ENCODE measurements at regions of chr6 and their contacts with region 1.

Region 1: DNA sequence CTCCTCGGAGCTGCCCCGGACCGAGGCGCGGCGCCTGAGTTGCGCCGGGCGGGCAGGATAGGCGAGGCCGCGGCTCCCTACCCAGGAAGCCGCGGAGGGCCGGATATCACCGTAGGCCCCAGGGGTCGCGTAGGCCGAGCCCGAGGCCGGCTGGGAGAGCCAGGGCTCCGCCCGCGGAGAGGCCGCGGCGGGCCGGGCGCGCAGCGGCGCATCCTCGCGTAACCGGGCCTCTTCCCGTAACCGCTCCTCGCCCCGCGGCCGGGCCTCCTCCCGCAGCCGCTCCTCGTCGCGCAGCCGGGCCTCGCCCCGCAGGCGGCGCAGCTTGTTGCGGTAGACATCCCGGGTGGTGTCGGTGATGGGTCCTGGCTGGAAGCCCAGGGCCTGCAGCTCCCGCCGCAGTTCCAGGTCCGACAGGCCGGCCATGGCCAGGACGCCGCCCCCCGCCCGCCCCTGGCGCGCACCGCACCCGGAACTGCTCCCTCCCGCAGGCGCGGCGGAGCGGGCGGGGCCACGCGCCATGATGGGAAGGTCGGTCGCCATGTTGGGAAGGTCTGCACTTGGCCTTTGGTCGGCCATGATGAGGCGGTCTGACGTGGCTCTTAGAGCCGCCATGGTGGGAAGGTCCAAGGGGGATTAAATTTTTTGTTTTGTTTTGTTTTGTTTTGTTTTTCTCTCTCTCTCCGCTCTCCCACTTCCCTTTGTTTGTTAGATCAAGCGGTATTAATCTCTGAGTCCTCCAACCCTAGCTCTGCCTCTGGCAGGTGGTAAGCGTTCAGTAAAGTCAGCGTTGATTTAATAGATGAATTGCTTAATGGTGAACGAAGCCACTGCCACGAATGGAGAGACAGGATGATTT is at the start of gene LEMD2:
- DNase-seq: peak; percentile 88 to 96 (median 91)
- ATAC-seq: peak; percentile 94
- H3K4me3 ChIP-seq: peak within 1 kb of the TSS; percentile 80
- H3K4me3 Mint-ChIP-seq: peak within 1 kb of the TSS; percentile 93 to 100 (median 98)
- H3K27ac ChIP-seq: peak within 1 kb of the TSS; percentile 92
- H3K27ac Mint-ChIP-seq: peak within 1 kb of the TSS; percentile 95 to 99 (median 97)
- H3K4me1 ChIP-seq: peaks cover 37 to 40% of the 10 kb centered on the region in 2 donors
- H3K4me1 Mint-ChIP-seq: peaks cover 40 to 55% (median 51%) of the 10 kb centered on the region in 7 donors
- H3K27me3 ChIP-seq: no peaks in the 10 kb centered on the region
- H3K27me3 Mint-ChIP-seq: peaks cover 0 to 25% (median 0%) of the 10 kb centered on the region in 5 donors
- total RNA-seq, gene LEMD2: 71.4 to 124 (median 118) TPM

Region 2: DNA sequence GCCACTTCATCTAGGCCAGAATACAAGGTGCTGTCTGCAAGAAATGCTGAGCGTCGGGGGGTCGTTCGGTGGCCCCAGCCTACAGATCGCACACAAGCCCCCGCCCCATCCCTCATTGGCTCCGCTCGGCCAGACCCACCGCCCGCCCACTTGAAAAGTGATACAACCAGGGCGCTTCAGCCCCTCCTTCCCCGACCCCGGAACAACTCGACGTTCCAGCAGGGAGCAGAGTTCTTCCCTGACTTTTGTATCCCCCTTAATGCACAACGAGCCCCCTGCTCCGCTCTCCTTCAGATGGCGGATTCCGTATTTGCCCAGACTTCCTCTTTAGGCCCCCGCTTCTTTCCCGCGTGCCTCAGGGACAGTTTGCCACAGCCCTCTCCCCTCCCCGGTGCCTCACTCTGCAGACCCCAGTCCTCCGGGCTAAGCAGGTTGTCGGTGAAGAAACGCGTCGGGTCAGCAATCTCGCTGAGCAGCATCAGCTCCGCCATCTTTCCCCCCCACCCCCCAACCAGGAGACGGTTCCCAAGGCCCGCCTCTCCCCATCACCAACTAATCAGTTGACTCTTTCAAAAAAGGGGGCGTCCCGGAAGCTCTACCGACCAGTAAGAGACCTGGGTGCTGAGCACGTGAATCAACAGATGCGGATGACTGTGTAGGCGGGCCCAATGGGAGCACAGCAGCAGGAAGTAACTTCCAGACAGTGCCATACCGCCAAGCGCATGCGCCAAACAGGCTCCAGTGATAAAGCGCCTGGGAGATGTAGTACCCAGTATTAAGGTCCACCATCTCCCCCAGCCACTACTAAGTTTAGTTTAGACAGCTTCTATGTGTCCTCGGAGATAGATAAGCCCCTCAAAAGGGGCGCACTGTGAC is 1661.0 kb before region 1 on chr6 and contains the start of gene ATF6B:
- CTCF ChIA-PET with region 1: no interaction called
- POLR2A ChIA-PET with region 1: no interaction called
- intact Hi-C with region 1: loop called in 1 of 2 experiments (anchors 2 kb)
- DNase-seq: peak; percentile 80 to 100 (median 96)
- ATAC-seq: peak; percentile 97
- H3K4me3 ChIP-seq: peak within 1 kb of the TSS; percentile 96
- H3K4me3 Mint-ChIP-seq: peak within 1 kb of the TSS; percentile 96 to 100 (median 98)
- H3K27ac ChIP-seq: peak within 1 kb of the TSS; percentile 92
- H3K27ac Mint-ChIP-seq: peak within 1 kb of the TSS; percentile 83 to 98 (median 97)
- H3K4me1 ChIP-seq: peaks cover 33% of the 10 kb centered on the region in 2 donors
- H3K4me1 Mint-ChIP-seq: peaks cover 38 to 66% (median 53%) of the 10 kb centered on the region in 7 donors
- H3K27me3 ChIP-seq: no peaks in the 10 kb centered on the region
- H3K27me3 Mint-ChIP-seq: peaks cover 0 to 4% (median 0%) of the 10 kb centered on the region in 5 donors
- total RNA-seq, gene ATF6B: 115 to 168 (median 142) TPM

Region 3: GRCh38 chr6:33454009-33454946 is 334.6 kb before region 1 on chr6 and contains the start of gene ZBTB9:
- CTCF ChIA-PET with region 1: no interaction called
- POLR2A ChIA-PET with region 1: no interaction called
- intact Hi-C with region 1: loop called (anchors 1 kb)
- DNase-seq: peak; percentile 80 to 93 (median 92)
- ATAC-seq: peak; percentile 100
- H3K4me3 ChIP-seq: peak within 1 kb of the TSS; percentile 93
- H3K4me3 Mint-ChIP-seq: peak within 1 kb of the TSS; percentile 88 to 99 (median 95)
- H3K27ac ChIP-seq: peak within 1 kb of the TSS; percentile 88
- H3K27ac Mint-ChIP-seq: peak within 1 kb of the TSS; percentile 86 to 98 (median 92)
- H3K4me1 ChIP-seq: peaks cover 12 to 22% of the 10 kb centered on the region in 2 donors
- H3K4me1 Mint-ChIP-seq: peaks cover 21 to 57% (median 45%) of the 10 kb centered on the region in 7 donors
- H3K27me3 ChIP-seq: no peaks in the 10 kb centered on the region
- H3K27me3 Mint-ChIP-seq: no peaks in the 10 kb centered on the region
- total RNA-seq, gene ZBTB9: 3.3 to 14.0 (median 9.8) TPM

Region 4: GRCh38 chr6:33620856-33621710 is 167.8 kb before region 1 on chr6 and contains the start of gene ITPR3:
- CTCF ChIA-PET with region 1: no interaction called
- POLR2A ChIA-PET with region 1: no interaction called
- intact Hi-C with region 1: loop called in 1 of 2 experiments (anchors 10 kb)
- DNase-seq: peak; percentile 63 to 83 (median 80)
- ATAC-seq: peak; percentile 94
- H3K4me3 ChIP-seq: peak within 1 kb of the TSS; percentile 80
- H3K4me3 Mint-ChIP-seq: peak within 1 kb of the TSS; percentile 91 to 97 (median 96)
- H3K27ac ChIP-seq: peak within 1 kb of the TSS; percentile 97
- H3K27ac Mint-ChIP-seq: peak within 1 kb of the TSS; percentile 82 to 96 (median 94)
- H3K4me1 ChIP-seq: peaks cover 9 to 35% of the 10 kb centered on the region in 2 donors
- H3K4me1 Mint-ChIP-seq: peaks cover 29 to 74% (median 66%) of the 10 kb centered on the region in 7 donors
- H3K27me3 ChIP-seq: no peaks in the 10 kb centered on the region
- H3K27me3 Mint-ChIP-seq: peaks cover 0 to 2% (median 0%) of the 10 kb centered on the region in 5 donors
- total RNA-seq, gene ITPR3: 35.6 to 65.7 (median 47.7) TPM

Region 5: DNA sequence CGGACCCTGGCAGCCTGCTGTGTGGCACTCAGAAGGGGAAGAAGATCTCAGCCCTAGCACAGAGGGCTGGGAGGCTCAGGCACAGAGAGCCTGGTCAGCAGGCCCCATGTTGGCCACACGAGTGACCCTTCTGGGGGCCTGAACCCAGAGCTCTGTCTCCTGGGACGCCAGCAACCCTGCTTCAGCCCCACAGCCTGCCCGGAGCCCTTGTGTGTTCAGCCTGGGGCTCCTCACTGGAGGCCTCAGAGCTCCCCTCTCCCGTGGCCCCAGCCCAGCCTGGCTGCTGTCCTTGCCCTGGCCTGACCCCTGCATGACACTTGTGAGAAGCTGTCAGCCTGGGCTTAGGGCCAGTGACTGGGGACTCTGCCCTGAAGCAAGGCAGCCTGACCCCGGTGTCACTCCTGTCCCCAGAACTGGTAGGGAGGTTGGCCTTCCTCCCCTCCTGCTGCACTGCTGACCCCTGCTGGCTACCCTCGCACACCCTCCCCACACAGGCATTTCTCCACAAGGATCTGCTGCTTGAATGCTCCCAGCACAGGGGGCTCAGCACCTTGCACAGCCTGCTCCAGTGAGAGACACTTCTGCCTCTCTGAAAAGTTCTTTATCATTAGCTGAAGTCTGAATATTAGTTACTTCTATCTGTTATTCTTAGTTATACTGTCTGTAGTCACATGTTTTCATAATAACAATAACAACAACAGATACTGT is 26.8 kb before region 1 on chr6:
- CTCF ChIA-PET with region 1: no interaction called
- POLR2A ChIA-PET with region 1: no interaction called
- intact Hi-C with region 1: no loop called
- DNase-seq: peak in 6 of 9 donors; percentile 21 to 34 (median 30)
- ATAC-seq: peak; percentile 67
- H3K4me3 ChIP-seq: no peak overlapping the region
- H3K4me3 Mint-ChIP-seq: no peak overlapping the region
- H3K27ac ChIP-seq: no peak overlapping the region
- H3K27ac Mint-ChIP-seq: peak overlapping the region in 1 of 9 donors; percentile 8
- H3K4me1 ChIP-seq: no peaks in the 10 kb centered on the region
- H3K4me1 Mint-ChIP-seq: no peaks in the 10 kb centered on the region
- H3K27me3 ChIP-seq: no peaks in the 10 kb centered on the region
- H3K27me3 Mint-ChIP-seq: peaks cover 0 to 8% (median 5%) of the 10 kb centered on the region in 5 donors

Region 6: DNA sequence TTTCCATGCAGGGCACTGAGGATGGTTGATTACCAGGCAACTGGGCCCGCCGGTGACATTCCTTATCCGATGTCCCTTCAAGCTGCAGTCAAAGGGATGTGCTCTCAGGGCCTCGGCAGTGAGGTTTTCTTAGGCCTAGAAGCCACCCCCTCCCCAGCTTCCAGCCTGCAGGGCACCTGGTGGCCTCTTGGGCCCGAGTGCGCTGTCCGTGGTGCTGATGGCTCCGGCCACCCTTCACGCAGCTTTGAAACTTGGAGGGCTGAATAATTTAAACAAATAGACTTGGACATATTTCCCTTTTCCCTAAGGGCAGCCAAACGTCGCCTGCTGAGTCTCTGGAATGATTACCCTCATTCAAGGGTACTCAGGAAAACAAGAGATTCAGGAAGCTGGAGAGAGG is 23.7 kb after region 1 on chr6:
- CTCF ChIA-PET with region 1: no interaction called
- POLR2A ChIA-PET with region 1: no interaction called
- intact Hi-C with region 1: loop called in 1 of 2 experiments (anchors 2 kb)
- DNase-seq: peak in 4 of 9 donors; percentile 22 to 61 (median 26)
- ATAC-seq: no peak
- H3K4me3 ChIP-seq: no peak overlapping the region
- H3K4me3 Mint-ChIP-seq: no peak overlapping the region
- H3K27ac ChIP-seq: no peak overlapping the region
- H3K27ac Mint-ChIP-seq: no peak overlapping the region
- H3K4me1 ChIP-seq: peaks cover 5 to 7% of the 10 kb centered on the region in 2 donors
- H3K4me1 Mint-ChIP-seq: peaks cover 10 to 22% (median 17%) of the 10 kb centered on the region in 7 donors
- H3K27me3 ChIP-seq: peaks cover 0 to 6% of the 10 kb centered on the region in 2 donors
- H3K27me3 Mint-ChIP-seq: peaks cover 30 to 68% (median 61%) of the 10 kb centered on the region in 5 donors

Region 7: GRCh38 chr6:34027445-34027936 is 238.6 kb after region 1 on chr6:
- CTCF ChIA-PET with region 1: no interaction called
- POLR2A ChIA-PET with region 1: no interaction called
- intact Hi-C with region 1: loop called in 1 of 2 experiments (anchors 1 kb)
- DNase-seq: peak; percentile 36 to 78 (median 64)
- ATAC-seq: peak; percentile 66
- H3K4me3 ChIP-seq: no peak overlapping the region
- H3K4me3 Mint-ChIP-seq: no peak overlapping the region
- H3K27ac ChIP-seq: no peak overlapping the region
- H3K27ac Mint-ChIP-seq: no peak overlapping the region
- H3K4me1 ChIP-seq: no peaks in the 10 kb centered on the region
- H3K4me1 Mint-ChIP-seq: peaks cover 0 to 4% (median 0%) of the 10 kb centered on the region in 7 donors
- H3K27me3 ChIP-seq: no peaks in the 10 kb centered on the region
- H3K27me3 Mint-ChIP-seq: peaks cover 0 to 4% (median 0%) of the 10 kb centered on the region in 5 donors

Region 8: DNA sequence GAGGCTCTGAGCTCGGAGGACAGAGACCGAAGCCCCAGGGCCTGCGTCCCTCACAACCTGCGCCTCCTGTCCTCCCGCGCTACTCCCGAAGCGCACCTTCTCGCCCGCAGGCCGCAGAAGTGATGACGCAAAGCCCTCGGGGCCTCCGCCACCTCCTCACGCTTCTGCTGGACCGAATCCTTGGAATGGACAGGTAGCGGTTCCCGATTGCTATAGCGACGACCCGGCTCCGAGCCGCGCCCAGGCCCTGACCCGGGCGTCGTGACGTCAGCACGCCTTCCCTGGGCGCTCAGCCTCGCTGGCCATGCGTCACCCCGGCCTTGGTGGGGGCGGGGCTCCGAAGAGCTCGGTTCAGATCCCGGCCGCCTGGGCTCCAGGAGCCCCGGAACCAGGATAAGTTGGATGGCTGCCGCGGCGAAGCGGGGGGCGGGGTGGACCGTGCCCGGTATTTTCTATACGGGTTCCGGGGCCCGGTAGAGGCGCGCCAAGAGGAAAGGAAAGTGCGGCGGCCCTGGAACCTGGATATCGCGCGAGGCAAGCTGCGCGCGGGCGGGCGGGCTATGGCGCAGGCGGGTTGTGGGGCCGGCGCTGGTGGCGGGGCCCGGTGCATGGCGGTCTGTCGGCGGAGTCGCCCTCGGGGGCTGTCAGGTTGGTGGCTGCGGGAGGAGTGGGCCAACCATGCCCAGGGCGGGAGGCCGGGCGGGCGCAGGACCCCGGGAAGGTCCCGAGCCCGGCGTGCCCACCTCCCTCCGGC is 1470.4 kb after region 1 on chr6 and contains the start of gene ZNF76:
- CTCF ChIA-PET with region 1: no interaction called
- POLR2A ChIA-PET with region 1: no interaction called
- intact Hi-C with region 1: loop called in 1 of 2 experiments (anchors 2 kb)
- DNase-seq: peak; percentile 89 to 93 (median 92)
- ATAC-seq: peak; percentile 88
- H3K4me3 ChIP-seq: peak within 1 kb of the TSS; percentile 65
- H3K4me3 Mint-ChIP-seq: peak within 1 kb of the TSS; percentile 85 to 99 (median 97)
- H3K27ac ChIP-seq: peak within 1 kb of the TSS; percentile 95
- H3K27ac Mint-ChIP-seq: peak within 1 kb of the TSS; percentile 89 to 99 (median 97)
- H3K4me1 ChIP-seq: peaks cover 15 to 17% of the 10 kb centered on the region in 2 donors
- H3K4me1 Mint-ChIP-seq: peaks cover 37 to 64% (median 50%) of the 10 kb centered on the region in 7 donors
- H3K27me3 ChIP-seq: no peaks in the 10 kb centered on the region
- H3K27me3 Mint-ChIP-seq: no peaks in the 10 kb centered on the region
- total RNA-seq, gene ZNF76: 44.4 to 110 (median 77.2) TPM

Measured in naive thymus-derived CD4-positive, alpha-beta T cell (primary cell).